Activated CD8-positive, alpha-beta T cell treated with anti-CD3 and anti-CD28 coated beads for 36 hours (primary cell): ENCODE measurements at regions of chr18 and their contacts with region 1.

Region 1: GRCh38 chr18:3593904-3594661 is 144.1 kb downstream of the TGIF1 start:
- DNase-seq: peak; percentile 95
- ATAC-seq: peak; percentile 85
- H3K4me3 Mint-ChIP-seq: peak overlapping the region; percentile 82
- H3K27ac Mint-ChIP-seq: peak overlapping the region; percentile 95
- H3K4me1 Mint-ChIP-seq: peaks cover 50% of the 10 kb centered on the region
- H3K27me3 Mint-ChIP-seq: no peaks in the 10 kb centered on the region
- CTCF ChIP-seq: peak; percentile 81

Region 2: GRCh38 chr18:3261371-3262246 is 332.5 kb before region 1 on chr18 and contains the start of gene MYL12B:
- CTCF ChIA-PET with region 1: interaction called, 4 read pairs
- POLR2A ChIA-PET with region 1: interaction called, 10 read pairs
- intact Hi-C with region 1: no loop called
- DNase-seq: peak; percentile 85
- ATAC-seq: peak; percentile 81
- H3K4me3 Mint-ChIP-seq: peak within 1 kb of the TSS; percentile 91
- H3K27ac Mint-ChIP-seq: peak within 1 kb of the TSS; percentile 99
- H3K4me1 Mint-ChIP-seq: peaks cover 59% of the 10 kb centered on the region
- H3K27me3 Mint-ChIP-seq: no peaks in the 10 kb centered on the region
- CTCF ChIP-seq: no peak
- total RNA-seq, gene MYL12B: 243 to 264 TPM

Region 3: DNA sequence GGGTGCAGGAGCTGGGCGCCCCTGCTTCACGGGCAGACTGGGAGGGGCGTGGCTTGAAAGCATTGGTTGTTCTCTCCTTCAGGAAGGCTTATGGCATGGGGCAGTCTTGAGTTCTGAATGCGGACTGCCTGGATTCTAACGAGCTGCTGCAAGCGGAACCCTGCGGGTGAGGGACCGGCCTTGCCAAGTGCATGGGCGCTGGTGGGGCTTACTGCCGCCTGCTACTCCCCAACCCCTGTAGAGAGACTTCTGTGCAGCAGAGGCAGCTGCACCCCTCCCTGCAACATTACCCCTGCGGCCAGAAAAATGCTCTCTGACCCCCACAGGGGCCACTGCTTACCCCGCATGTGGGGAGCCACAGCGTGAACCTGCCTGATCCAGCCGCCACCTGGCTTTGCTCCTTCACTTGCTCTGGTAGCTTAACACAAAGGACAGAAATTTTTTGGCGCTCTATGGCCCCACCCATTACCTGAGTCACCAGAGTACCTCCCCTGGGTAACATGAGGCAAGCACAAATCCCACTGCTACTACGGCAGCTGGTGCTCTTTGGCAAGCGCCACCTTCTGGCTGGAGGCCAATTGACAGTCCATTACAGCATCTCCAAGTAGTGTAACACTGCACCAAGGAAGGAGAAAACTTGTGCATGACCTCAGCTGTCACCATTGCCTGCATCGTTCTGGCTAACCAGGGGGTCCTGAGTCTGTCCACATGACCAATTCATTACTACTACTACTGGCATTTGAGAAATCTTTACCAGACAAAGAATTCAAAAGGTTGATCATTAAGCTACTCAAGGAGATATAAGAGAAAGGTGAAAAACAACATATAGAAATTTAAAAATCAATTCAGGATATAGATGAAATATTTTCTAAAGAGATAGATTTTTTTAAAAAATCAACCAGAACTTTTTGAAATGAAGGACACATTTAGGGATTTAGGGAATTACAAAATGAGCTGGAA is 296.8 kb before region 1 on chr18:
- CTCF ChIA-PET with region 1: interaction called, 20 read pairs
- POLR2A ChIA-PET with region 1: interaction called, 4 read pairs
- intact Hi-C with region 1: no loop called
- DNase-seq: peak; percentile 99
- ATAC-seq: peak; percentile 99
- H3K4me3 Mint-ChIP-seq: peak overlapping the region; percentile 92
- H3K27ac Mint-ChIP-seq: peak overlapping the region; percentile 86
- H3K4me1 Mint-ChIP-seq: peaks cover 5% of the 10 kb centered on the region
- H3K27me3 Mint-ChIP-seq: peaks cover 24% of the 10 kb centered on the region
- CTCF ChIP-seq: peak; percentile 83

Region 4: GRCh38 chr18:3604498-3605408 is 10.7 kb after region 1 on chr18:
- CTCF ChIA-PET with region 1: interaction called, 47 read pairs
- POLR2A ChIA-PET with region 1: interaction called, 33 read pairs
- intact Hi-C with region 1: no loop called
- DNase-seq: peak; percentile 61
- ATAC-seq: peak; percentile 70
- H3K4me3 Mint-ChIP-seq: no peak overlapping the region
- H3K27ac Mint-ChIP-seq: no peak overlapping the region
- H3K4me1 Mint-ChIP-seq: peaks cover 10% of the 10 kb centered on the region
- H3K27me3 Mint-ChIP-seq: no peaks in the 10 kb centered on the region
- CTCF ChIP-seq: no peak

Region 5: GRCh38 chr18:3631887-3632286 is 37.8 kb after region 1 on chr18:
- CTCF ChIA-PET with region 1: interaction called, 10 read pairs
- POLR2A ChIA-PET with region 1: interaction called, 4 read pairs
- intact Hi-C with region 1: no loop called
- DNase-seq: no peak
- ATAC-seq: no peak
- H3K4me3 Mint-ChIP-seq: no peak overlapping the region
- H3K27ac Mint-ChIP-seq: no peak overlapping the region
- H3K4me1 Mint-ChIP-seq: peaks cover 29% of the 10 kb centered on the region
- H3K27me3 Mint-ChIP-seq: no peaks in the 10 kb centered on the region
- CTCF ChIP-seq: no peak

Region 6: GRCh38 chr18:3660739-3661515 is 66.8 kb after region 1 on chr18:
- CTCF ChIA-PET with region 1: interaction called, 91 read pairs
- POLR2A ChIA-PET with region 1: interaction called, 7 read pairs
- intact Hi-C with region 1: no loop called
- DNase-seq: no peak
- ATAC-seq: no peak
- H3K4me3 Mint-ChIP-seq: no peak overlapping the region
- H3K27ac Mint-ChIP-seq: no peak overlapping the region
- H3K4me1 Mint-ChIP-seq: peaks cover 19% of the 10 kb centered on the region
- H3K27me3 Mint-ChIP-seq: no peaks in the 10 kb centered on the region
- CTCF ChIP-seq: no peak

Region 7: GRCh38 chr18:3799176-3799914 is 205.3 kb after region 1 on chr18:
- CTCF ChIA-PET with region 1: no interaction called
- POLR2A ChIA-PET with region 1: no interaction called
- intact Hi-C with region 1: no loop called
- DNase-seq: no peak
- ATAC-seq: no peak
- H3K4me3 Mint-ChIP-seq: no peak overlapping the region
- H3K27ac Mint-ChIP-seq: no peak overlapping the region
- H3K4me1 Mint-ChIP-seq: peaks cover under 1% of the 10 kb centered on the region
- H3K27me3 Mint-ChIP-seq: peaks cover 6% of the 10 kb centered on the region
- CTCF ChIP-seq: no peak